Common myeloid progenitor, CD34-positive (primary cell): ENCODE measurements at regions of chr2 and their contacts with region 1.

Region 1: GRCh38 chr2:241081643-241082340 is 20.3 kb downstream of the MTERF4 start:
- DNase-seq: no peak
- H3K4me3 ChIP-seq: no peak overlapping the region
- H3K27ac ChIP-seq: no peak overlapping the region
- H3K4me1 ChIP-seq: no peaks in the 10 kb centered on the region
- H3K27me3 ChIP-seq: no peaks in the 10 kb centered on the region

Region 2: GRCh38 chr2:240655931-240656886 is 425.6 kb before region 1 on chr2:
- CTCF ChIA-PET with region 1: no interaction called
- POLR2A ChIA-PET with region 1: no interaction called
- DNase-seq: peak; percentile 72 to 90 (median 88)
- H3K4me3 ChIP-seq: no peak overlapping the region
- H3K27ac ChIP-seq: no peak overlapping the region
- H3K4me1 ChIP-seq: peaks cover 0 to 15% (median 8%) of the 10 kb centered on the region in 4 experiments
- H3K27me3 ChIP-seq: peaks cover 3 to 52% (median 12%) of the 10 kb centered on the region in 5 experiments

Region 3: GRCh38 chr2:241095594-241096286 is 13.9 kb after region 1 on chr2:
- CTCF ChIA-PET with region 1: interaction called, 11 read pairs
- POLR2A ChIA-PET with region 1: no interaction called
- DNase-seq: peak; percentile 13 to 57 (median 40)
- H3K4me3 ChIP-seq: no peak overlapping the region
- H3K27ac ChIP-seq: peak overlapping the region; percentile 1 to 2
- H3K4me1 ChIP-seq: peaks cover 0 to 16% (median 3%) of the 10 kb centered on the region in 4 experiments
- H3K27me3 ChIP-seq: no peaks in the 10 kb centered on the region